ENCODE measurements at regions of chr3 and their contacts with region 1.

Region 1: DNA sequence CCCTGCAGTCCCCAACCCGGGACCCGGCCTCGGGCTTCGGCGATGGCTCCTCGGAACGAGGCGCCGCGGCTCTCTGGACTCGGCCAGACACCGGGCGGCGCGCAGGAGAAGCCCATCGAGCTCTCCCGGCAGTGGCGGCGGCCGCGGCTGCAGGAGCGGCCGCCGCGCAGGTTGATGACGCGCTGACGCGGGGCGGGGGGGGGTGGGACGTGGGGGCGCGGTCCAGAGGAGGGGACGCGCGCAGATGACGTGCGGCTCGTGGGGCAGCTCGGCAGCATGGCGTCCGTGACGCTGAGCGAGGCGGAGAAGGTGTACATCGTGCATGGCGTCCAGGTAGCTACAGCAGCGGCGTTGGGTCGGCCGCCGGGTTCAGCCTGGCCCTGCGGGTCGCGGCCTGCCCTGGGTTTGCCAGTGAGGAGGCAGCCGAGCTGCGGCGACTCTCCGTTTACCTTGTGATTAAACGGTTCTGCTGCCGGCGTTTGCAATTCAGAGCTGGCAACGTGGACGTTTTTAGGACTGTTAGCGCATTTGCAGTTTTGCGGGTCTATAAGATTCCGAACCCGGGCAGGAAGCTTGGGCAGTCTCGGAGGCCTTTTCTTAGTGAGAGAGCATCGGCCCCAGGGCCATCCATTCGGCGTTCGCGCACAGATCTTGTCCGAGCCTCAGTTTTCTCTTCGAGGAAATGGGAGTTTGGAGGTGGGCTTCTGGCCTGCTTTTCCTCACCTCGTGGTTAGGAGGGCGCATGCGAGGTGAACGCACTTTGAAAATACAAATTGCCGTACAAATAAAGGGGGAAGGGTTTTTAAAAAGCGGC is at the starts of genes EXOSC7 and ZDHHC3:
- DNase-seq: peak; percentile 90
- ATAC-seq: peak; percentile 93
- H3K4me3 Mint-ChIP-seq: peak within 1 kb of the TSS; percentile 97
- H3K27ac Mint-ChIP-seq: peak within 1 kb of the TSS; percentile 96
- H3K4me1 Mint-ChIP-seq: peaks cover 62% of the 10 kb centered on the region
- H3K27me3 Mint-ChIP-seq: no peaks in the 10 kb centered on the region
- total RNA-seq, gene EXOSC7: 49.5 to 50.1 TPM
- total RNA-seq, gene ZDHHC3: 62.3 to 71.3 TPM

Region 2: DNA sequence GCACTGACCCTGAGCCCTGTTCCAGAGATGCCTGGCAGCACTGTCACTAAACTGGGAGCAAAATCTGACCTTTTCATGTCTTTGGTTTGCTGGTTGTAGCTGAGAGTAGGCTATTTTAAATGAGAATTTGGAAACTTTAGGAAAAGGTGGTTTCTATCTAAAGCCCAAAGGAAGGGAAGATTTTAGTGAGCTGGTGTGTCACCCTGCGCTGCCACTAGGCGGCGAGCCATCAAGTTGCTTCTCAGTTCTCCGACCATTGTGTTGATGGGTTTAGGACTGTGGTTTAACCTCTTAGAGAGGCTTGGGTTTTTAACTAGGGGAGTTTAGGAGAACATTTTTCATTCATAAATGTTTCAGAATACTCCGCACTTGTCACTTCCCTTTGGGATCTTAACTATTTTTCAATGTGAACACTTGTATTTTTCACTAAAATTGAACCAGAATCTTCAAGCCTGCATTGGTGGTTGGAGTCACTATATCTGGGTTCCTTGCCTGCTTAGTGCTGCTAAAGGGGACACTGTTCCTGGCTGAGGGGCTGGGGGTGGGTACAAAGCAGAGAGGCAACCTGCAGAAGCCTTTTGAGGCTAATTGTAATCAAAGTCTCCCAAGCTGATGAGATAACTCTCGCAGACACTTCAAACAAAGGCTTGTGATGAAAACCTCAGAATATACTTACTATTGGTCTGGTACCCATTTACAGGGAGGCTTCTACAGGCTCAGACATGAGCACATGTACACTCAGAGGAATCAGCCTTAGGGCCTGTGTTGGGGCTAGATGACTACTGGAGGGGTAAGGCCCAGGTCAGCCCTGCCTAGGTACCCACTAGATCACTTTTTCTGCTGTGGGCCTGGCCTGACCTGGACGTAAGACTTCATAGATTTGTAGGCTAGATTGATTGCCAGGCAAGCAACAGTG is 16.6 kb after region 1 on chr3:
- CTCF ChIA-PET with region 1: interaction called, 38 read pairs
- POLR2A ChIA-PET with region 1: interaction called, 9 read pairs
- DNase-seq: no peak
- ATAC-seq: no peak
- H3K4me3 Mint-ChIP-seq: no peak overlapping the region
- H3K27ac Mint-ChIP-seq: peak overlapping the region; percentile 48
- H3K4me1 Mint-ChIP-seq: peaks cover 52% of the 10 kb centered on the region
- H3K27me3 Mint-ChIP-seq: no peaks in the 10 kb centered on the region

Region 3: DNA sequence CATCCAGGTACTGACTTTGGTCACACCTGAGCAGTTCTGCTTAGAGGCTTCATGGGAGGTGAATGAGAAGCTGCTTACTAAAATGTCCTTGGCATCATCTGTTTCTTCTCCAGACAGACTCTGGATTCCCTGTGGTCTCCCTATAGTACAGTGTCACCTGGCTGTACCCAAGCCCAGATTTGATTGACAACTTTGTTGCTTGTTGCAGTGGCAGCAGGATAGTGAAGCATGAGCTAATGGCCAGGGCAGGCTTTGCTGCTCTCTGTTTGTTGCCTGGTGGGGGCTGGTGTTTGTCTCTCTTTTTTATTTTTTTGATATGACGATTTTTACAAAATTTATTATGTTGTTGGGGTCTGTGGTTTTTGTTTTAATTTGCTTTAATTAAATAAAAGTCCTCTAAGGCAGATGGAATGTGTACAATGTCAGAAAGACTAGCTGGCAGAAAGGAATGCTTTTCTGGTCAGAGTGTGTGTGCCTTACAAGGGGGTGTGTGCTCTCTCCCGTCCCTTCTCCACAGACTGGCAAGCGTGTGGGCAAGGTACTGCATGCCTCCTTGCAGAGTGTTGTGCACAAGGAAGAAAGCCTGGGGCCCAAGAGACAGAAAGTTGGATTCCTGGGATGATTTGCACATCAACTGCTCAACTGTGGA is 34.6 kb after region 1 on chr3:
- CTCF ChIA-PET with region 1: interaction called, 3 read pairs
- POLR2A ChIA-PET with region 1: interaction called, 10 read pairs
- DNase-seq: no peak
- ATAC-seq: no peak
- H3K4me3 Mint-ChIP-seq: no peak overlapping the region
- H3K27ac Mint-ChIP-seq: peak overlapping the region; percentile 48
- H3K4me1 Mint-ChIP-seq: peaks cover 6% of the 10 kb centered on the region
- H3K27me3 Mint-ChIP-seq: no peaks in the 10 kb centered on the region

Measured in activated CD8-positive, alpha-beta T cell treated with anti-CD3 and anti-CD28 coated beads, Interleukin-2, amount 10 ng/mL, durations not matched to agents 7 days and 5 days (primary cell).